ENCODE measurements at regions of chr15 and their contacts with region 1.

Region 1: GRCh38 chr15:22795206-22796063 is 9.0 kb downstream of the NIPA1 start:
- DNase-seq: no peak
- H3K4me3 Mint-ChIP-seq: no peak overlapping the region
- H3K27ac Mint-ChIP-seq: no peak overlapping the region
- H3K4me1 Mint-ChIP-seq: peaks cover 29% of the 10 kb centered on the region
- H3K27me3 Mint-ChIP-seq: no peaks in the 10 kb centered on the region

Region 2: DNA sequence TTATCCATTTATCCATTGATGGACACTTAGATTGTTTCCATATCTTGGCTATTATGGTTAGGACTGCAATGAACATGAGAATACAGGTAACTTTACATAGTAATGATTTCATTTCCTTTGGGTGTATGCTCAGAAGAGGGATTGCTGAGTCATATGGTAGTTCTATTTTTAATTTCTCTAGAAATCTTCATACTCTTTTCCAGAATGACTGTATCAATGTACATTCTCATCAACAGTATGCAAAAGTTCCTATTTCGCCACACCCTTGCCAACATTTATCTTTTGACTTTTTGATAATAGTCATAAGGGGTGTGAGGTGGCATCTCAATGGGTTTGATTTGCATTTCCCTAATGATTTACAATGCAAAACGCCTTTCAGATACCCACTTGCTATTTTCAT is 15.2 kb before region 1 on chr15:
- intact Hi-C with region 1: loop called (anchors 1 kb)
- DNase-seq: no peak
- H3K4me3 Mint-ChIP-seq: peak overlapping the region; percentile 56
- H3K27ac Mint-ChIP-seq: peak overlapping the region; percentile 77
- H3K4me1 Mint-ChIP-seq: peaks cover 29% of the 10 kb centered on the region
- H3K27me3 Mint-ChIP-seq: no peaks in the 10 kb centered on the region